HCT116 (cell line): ENCODE measurements at regions of chr2 and their contacts with region 1.

Region 1: DNA sequence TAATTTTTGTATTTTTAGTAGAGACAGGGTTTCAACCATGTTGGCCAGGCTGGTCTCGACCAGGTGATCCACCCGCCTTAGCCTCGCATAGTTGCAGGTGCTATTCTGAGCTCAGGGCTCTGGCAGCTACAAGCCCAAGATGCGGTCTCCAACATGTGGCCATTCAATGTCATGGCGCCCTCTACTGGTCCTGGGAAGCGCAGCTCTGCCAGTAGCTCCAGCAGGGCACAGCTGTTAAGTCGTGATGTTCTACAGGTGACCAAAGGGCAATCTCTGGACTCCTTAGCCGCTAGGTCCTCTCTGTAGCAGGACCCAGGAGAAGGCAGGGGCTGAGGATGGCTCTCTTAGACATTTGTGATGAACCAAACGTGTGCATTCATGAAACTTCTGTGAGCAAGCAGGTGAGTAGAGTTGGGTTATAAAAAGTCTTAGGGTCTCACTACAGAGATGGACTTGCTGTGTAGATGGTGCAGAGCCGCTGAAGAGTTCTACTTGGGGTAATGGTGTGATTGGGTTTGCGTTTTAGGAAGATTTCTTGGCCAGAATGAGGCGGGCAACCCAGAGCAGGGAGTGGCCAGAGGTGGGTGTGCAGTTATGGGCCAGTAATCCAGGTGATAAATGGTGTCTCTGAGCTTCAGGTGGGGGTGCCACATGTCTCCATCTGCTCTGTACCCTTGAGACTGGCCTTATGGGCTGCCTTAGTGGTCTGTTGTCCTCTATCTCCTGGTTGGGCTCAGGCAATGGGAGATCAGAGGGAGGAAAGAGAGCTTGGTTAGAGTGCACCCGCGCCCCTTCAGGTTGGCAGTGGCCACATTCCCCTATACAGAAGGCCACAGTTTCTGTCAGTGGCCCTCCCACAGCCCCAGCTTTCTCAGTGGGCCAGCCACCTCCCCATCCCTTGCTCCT is 31.0 kb downstream of the IL37 start:
- DNase-seq: peak; percentile 64
- ATAC-seq: peak; percentile 97
- H3K4me3 ChIP-seq: no peak overlapping the region
- H3K27ac ChIP-seq: no peak overlapping the region
- H3K4me1 ChIP-seq: peaks cover 5 to 17% of the 10 kb centered on the region in 2 experiments
- H3K27me3 ChIP-seq: no peaks in the 10 kb centered on the region
- CTCF ChIP-seq: peak; percentile 75 to 96 (median 93)
- POLR2A ChIP-seq: no peak
- RAD21 ChIP-seq: peak; percentile 93

Region 2: GRCh38 chr2:112737542-112738232 is 204.3 kb before region 1 on chr2:
- CTCF ChIA-PET with region 1: interaction called, 16 read pairs
- POLR2A ChIA-PET with region 1: no interaction called
- RAD21 ChIA-PET with region 1: no interaction called
- intact Hi-C with region 1: no loop called
- DNase-seq: no peak
- ATAC-seq: no peak
- H3K4me3 ChIP-seq: peak overlapping the region in 1 of 2 experiments; percentile 5; a peak in 1 of 4 replicates
- H3K27ac ChIP-seq: no peak overlapping the region
- H3K4me1 ChIP-seq: peaks cover 15 to 23% of the 10 kb centered on the region in 2 experiments
- H3K27me3 ChIP-seq: no peaks in the 10 kb centered on the region
- CTCF ChIP-seq: no peak
- POLR2A ChIP-seq: no peak
- RAD21 ChIP-seq: no peak

Region 3: GRCh38 chr2:112884869-112885505 is 57.0 kb before region 1 on chr2:
- CTCF ChIA-PET with region 1: interaction called, 29 read pairs
- POLR2A ChIA-PET with region 1: interaction called, 3 read pairs
- RAD21 ChIA-PET with region 1: no interaction called
- intact Hi-C with region 1: loop called (anchors 1 kb)
- DNase-seq: peak; percentile 40
- ATAC-seq: peak; percentile 91
- H3K4me3 ChIP-seq: no peak overlapping the region
- H3K27ac ChIP-seq: no peak overlapping the region
- H3K4me1 ChIP-seq: peaks cover 3 to 18% of the 10 kb centered on the region in 2 experiments; a peak in 3 of 4 replicates
- H3K27me3 ChIP-seq: no peaks in the 10 kb centered on the region
- CTCF ChIP-seq: peak; percentile 79 to 96 (median 93)
- POLR2A ChIP-seq: no peak
- RAD21 ChIP-seq: peak; percentile 90

Region 4: DNA sequence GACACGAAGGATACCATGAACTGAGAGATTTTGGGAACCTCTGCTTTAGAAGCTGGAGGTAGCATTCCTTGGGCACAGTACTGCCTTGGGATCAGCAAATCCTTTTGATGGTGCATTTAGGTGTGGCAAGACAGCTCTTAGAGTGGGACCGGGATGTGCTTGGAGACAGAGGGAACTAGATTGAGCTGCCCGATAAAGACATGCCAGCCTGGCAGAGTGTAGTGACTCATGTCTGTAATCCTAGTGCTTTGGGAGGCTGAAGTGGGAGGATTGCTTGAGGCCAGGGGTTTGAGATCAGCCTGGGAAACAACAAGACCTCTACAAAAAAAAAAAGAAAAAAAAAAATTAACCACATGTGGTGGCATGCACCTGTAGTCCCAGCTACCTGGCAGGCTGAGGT is 13.2 kb before region 1 on chr2:
- CTCF ChIA-PET with region 1: interaction called, 12 read pairs
- POLR2A ChIA-PET with region 1: no interaction called
- RAD21 ChIA-PET with region 1: no interaction called
- intact Hi-C with region 1: no loop called
- DNase-seq: no peak
- ATAC-seq: no peak
- H3K4me3 ChIP-seq: no peak overlapping the region
- H3K27ac ChIP-seq: no peak overlapping the region
- H3K4me1 ChIP-seq: peaks cover 0 to 7% of the 10 kb centered on the region in 2 experiments; a peak in 1 of 4 replicates
- H3K27me3 ChIP-seq: no peaks in the 10 kb centered on the region
- CTCF ChIP-seq: no peak
- POLR2A ChIP-seq: no peak
- RAD21 ChIP-seq: no peak